GM10248 (cell line): ENCODE measurements at regions of chr7 and their contacts with region 1.

Region 1: GRCh38 chr7:128164061-128164954 is 76.8 kb upstream of the LEP start:
- DNase-seq: no peak
- CTCF ChIP-seq: no peak

Region 2: DNA sequence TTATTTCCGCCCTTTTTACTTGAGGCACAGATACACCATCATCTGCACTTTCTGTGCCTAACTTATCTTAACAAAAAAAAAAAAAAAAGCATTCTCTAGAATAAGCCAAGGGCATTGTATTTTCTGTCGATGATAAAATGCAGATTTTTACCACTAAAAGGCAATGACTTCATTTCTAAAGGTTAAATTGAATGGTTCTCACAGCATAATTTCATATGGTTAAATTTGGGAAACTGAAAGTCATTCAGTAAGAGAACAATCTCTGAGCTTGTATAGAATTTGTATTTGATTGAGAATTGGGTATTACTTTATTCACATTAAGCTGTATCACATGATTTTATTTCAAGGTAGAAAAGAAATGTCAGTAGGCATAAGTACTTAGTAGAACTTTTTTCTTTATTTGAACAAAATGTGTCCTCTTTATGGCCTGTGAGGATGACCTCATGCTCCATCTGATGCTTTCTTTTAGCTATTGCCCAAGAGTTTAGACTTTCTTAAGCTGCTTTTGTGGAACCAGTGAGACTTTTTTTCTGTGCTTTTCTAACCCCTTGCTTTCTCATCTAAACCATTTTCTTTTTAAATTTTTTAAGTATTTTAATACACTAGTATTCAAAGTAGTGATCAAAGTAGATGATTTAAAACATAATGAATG is 243.4 kb before region 1 on chr7:
- CTCF ChIA-PET with region 1: no interaction called
- POLR2A ChIA-PET with region 1: interaction called, 14 read pairs
- DNase-seq: no peak
- CTCF ChIP-seq: no peak

Region 3: GRCh38 chr7:128145191-128145590 is 19.1 kb before region 1 on chr7:
- CTCF ChIA-PET with region 1: no interaction called
- POLR2A ChIA-PET with region 1: no interaction called
- DNase-seq: no peak
- CTCF ChIP-seq: no peak